Esophagus muscularis mucosa (tissue), 4 donors: ENCODE measurements at regions of chr22 and their contacts with region 1.

Region 1: DNA sequence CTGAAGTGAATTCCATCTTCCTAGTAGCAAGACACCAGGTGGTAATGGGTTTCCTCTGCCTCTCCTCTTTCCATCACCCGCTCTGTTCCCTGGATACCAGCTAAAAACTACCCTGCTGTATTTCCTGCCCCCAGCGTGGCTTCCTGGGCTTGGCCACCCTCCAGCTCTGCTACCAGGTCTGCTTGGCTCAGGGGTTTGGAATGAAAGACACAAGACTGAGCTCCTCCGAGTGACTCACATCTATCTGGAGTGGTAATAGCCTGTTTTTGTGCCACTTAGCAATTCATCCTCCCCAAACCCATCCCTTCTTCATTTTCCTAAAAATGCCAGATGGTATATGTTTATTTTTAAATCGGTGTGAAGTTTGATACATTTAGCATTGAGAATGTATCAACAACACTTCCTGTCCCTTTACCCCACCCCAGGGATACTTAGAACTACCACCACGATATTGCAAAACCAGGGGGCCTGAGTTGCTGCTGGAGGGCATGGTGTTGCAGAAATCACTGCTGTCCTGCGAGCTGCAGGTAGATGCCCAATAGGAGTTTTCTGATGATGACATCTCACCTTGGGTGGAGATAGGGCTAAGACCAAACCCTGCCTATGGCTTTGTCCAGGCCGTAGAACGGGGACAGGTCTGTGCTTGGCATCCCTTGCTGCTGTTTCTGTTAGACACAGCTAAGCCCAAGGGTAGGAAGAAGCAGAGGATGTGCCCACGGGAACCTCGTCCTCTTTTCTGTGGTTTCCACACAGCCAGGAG is 7.5 kb upstream of the MICAL3 start:
- DNase-seq: no peak
- H3K4me3 ChIP-seq: no peak overlapping the region
- H3K27ac ChIP-seq: peak overlapping the region; percentile 78 to 83 (median 81)
- H3K4me1 ChIP-seq: peaks cover 19 to 36% (median 35%) of the 10 kb centered on the region in 4 donors
- H3K27me3 ChIP-seq: no peaks in the 10 kb centered on the region
- CTCF ChIP-seq: no peak
- EP300 ChIP-seq: no peak
- POLR2A ChIP-seq: no peak

Region 2: GRCh38 chr22:18068381-18068988 is 36.6 kb after region 1 on chr22:
- intact Hi-C with region 1: loop called (anchors 5 kb)
- DNase-seq: no peak
- H3K4me3 ChIP-seq: peak overlapping the region; percentile 8 to 29 (median 29)
- H3K27ac ChIP-seq: peak overlapping the region; percentile 86 to 94 (median 89)
- H3K4me1 ChIP-seq: peaks cover 3 to 49% (median 34%) of the 10 kb centered on the region in 4 donors
- H3K27me3 ChIP-seq: peaks cover 0 to 4% (median 0%) of the 10 kb centered on the region in 4 donors
- CTCF ChIP-seq: peak in 1 of 3 experiments; percentile 5
- EP300 ChIP-seq: no peak
- POLR2A ChIP-seq: no peak

Region 3: GRCh38 chr22:18133452-18133851 is 101.6 kb after region 1 on chr22:
- intact Hi-C with region 1: no loop called
- DNase-seq: no peak
- H3K4me3 ChIP-seq: no peak overlapping the region
- H3K27ac ChIP-seq: peak overlapping the region in 1 of 4 donors; percentile 43
- H3K4me1 ChIP-seq: peaks cover 0 to 5% (median 0%) of the 10 kb centered on the region in 4 donors
- H3K27me3 ChIP-seq: no peaks in the 10 kb centered on the region
- CTCF ChIP-seq: no peak
- EP300 ChIP-seq: no peak
- POLR2A ChIP-seq: no peak